Endothelial cell of umbilical vein (primary cell): ENCODE measurements at regions of chr17 and their contacts with region 1.

Region 1: DNA sequence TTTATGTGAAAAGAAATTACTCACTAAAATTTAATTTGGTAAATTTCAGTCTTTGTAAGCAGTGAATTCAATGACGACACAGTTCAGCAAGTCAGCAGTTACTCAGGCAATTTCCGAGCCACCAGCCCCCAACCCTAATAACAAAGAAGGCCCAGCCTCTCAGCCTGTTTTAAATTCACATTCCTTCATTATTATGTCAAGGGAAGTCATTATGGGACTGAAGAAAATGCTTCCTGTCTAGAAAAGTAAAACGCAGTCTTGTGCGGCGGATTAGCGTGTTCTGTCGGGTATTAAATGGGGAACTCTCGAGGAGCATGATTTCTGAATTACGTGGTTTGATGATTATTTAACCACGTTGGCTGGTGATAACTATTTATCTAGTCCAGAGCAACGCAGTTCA is 177.6 kb downstream of the AIPL1 start:
- DNase-seq: peak; percentile 88
- H3K4me3 ChIP-seq: no peak overlapping the region
- H3K27ac ChIP-seq: peak overlapping the region; percentile 100
- H3K4me1 ChIP-seq: peaks cover 33% of the 10 kb centered on the region
- H3K27me3 ChIP-seq: no peaks in the 10 kb centered on the region
- CTCF ChIP-seq: no peak
- POLR2A ChIP-seq: no peak

Region 2: GRCh38 chr17:6098050-6098822 is 159.1 kb before region 1 on chr17:
- CTCF ChIA-PET with region 1: no interaction called
- POLR2A ChIA-PET with region 1: no interaction called
- dilution Hi-C with region 1: no loop called
- intact Hi-C with region 1: loop called (anchors 1 kb)
- DNase-seq: peak; percentile 98
- H3K4me3 ChIP-seq: no peak overlapping the region
- H3K27ac ChIP-seq: peak overlapping the region; percentile 91
- H3K4me1 ChIP-seq: peaks cover 40% of the 10 kb centered on the region
- H3K27me3 ChIP-seq: no peaks in the 10 kb centered on the region
- CTCF ChIP-seq: no peak
- POLR2A ChIP-seq: no peak

Region 3: GRCh38 chr17:6290488-6291196 is 33.3 kb after region 1 on chr17:
- CTCF ChIA-PET with region 1: no interaction called
- POLR2A ChIA-PET with region 1: no interaction called
- dilution Hi-C with region 1: no loop called
- intact Hi-C with region 1: no loop called
- DNase-seq: no peak
- H3K4me3 ChIP-seq: no peak overlapping the region
- H3K27ac ChIP-seq: no peak overlapping the region
- H3K4me1 ChIP-seq: no peaks in the 10 kb centered on the region
- H3K27me3 ChIP-seq: peaks cover 0 to 6% of the 10 kb centered on the region in 2 experiments
- CTCF ChIP-seq: no peak
- POLR2A ChIP-seq: no peak

Region 4: DNA sequence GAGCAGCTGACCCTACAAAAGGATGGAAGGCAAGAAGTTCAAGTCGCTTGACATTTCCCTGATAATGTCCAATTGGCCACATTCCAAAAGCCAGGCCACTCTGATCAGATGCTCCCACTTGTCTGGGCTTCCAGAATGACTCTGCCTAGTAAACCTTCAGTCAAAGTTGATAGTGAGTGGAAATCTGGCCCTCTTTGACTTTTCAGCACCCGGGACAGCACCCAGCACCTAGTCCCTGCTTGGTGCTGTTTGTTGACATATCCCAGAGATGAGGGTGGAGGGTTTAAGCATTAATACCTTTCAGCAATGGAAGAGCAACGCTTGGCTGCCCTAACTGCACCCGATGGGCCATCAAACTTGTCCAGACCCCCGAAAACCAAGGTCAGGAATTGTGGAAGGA is 46.3 kb after region 1 on chr17:
- CTCF ChIA-PET with region 1: no interaction called
- POLR2A ChIA-PET with region 1: no interaction called
- dilution Hi-C with region 1: no loop called
- intact Hi-C with region 1: no loop called
- DNase-seq: peak; percentile 53
- H3K4me3 ChIP-seq: no peak overlapping the region
- H3K27ac ChIP-seq: no peak overlapping the region
- H3K4me1 ChIP-seq: no peaks in the 10 kb centered on the region
- H3K27me3 ChIP-seq: peaks cover 0 to 6% of the 10 kb centered on the region in 2 experiments
- CTCF ChIP-seq: no peak
- POLR2A ChIP-seq: no peak